Activated naive CD4-positive, alpha-beta T cell treated with anti-CD3 and anti-CD28 coated beads for 36 hours (primary cell): ENCODE measurements at regions of chr7 and their contacts with region 1.

Region 1: DNA sequence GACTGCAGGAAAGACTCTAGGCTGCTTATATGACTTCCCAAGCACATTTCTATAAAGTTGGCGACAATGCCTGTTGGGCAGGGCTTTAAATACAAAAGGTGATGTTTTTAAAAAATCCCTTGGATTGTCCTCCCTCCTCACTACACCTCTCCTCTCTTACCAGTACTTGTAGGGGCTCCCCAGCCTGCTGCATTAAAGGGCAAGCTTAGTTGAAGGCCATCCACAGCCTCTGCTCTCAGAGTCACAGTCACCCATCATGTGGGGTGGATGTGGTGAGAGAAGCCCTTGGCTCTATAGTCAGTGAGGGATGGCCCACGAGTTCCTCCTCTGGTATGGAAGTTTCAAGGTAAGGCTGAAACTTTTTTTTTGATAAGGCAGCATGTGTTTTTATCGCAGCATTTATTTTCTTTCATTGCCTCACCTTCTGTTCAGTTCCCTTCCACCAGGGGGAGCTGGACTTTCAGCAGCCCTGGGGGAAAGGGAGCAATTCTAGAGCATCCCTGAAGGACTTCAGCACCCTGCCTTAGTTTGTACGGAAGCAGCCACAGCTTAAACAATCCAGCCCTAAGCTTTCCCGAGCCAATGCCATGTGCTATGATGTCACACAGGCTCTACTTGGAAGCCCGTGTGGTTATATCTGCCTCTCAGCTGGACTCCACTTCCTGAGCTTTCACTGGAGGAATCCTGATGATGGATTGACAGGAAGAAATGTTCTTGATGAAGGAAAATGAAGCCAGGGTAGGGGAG is 131.9 kb downstream of the CALCR start:
- DNase-seq: peak; percentile 46
- H3K4me3 Mint-ChIP-seq: no peak overlapping the region
- H3K27ac Mint-ChIP-seq: no peak overlapping the region
- H3K4me1 Mint-ChIP-seq: no peaks in the 10 kb centered on the region
- H3K27me3 Mint-ChIP-seq: no peaks in the 10 kb centered on the region

Region 2: DNA sequence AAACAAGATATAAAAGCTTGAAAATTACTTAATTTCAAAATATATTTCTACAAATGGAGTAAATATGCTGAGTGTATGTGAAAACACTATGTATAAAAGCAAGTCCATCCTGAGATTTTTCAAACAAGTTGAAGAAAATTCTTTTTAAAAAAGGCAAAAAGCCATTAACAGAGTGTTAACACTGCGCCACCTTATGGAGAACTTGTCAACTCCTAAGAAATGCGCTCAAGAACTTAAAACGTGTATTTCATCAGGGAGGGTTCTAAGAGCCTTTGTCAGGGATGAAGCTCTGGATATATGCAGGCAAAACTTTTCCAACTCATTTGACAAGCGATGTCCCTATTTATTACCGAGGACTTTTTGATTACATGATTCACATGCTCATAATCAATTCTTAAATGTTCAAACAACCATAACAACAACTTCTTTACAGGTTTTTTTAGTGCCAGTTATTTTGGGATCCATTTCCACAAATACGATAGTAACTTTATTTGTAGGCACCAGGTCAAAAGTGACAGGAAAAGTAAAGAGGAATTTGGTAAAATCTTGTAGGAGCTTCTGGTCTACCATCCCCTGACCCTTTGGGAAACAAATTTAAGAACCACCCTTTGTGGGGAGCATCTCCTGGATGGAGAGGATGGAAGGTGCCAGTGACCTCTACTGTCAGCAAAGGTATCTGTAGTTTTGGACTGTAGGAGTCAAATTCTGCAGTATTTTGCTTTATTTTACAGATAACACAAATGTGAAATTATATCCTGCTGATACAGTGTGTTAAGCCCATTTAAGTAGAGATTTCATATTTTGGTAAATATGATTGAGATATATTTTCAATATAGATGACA is 108.6 kb after region 1 on chr7:
- CTCF ChIA-PET with region 1: interaction called, 6 read pairs
- intact Hi-C with region 1: loop called (anchors 2 kb)
- DNase-seq: no peak
- H3K4me3 Mint-ChIP-seq: no peak overlapping the region
- H3K27ac Mint-ChIP-seq: no peak overlapping the region
- H3K4me1 Mint-ChIP-seq: no peaks in the 10 kb centered on the region
- H3K27me3 Mint-ChIP-seq: no peaks in the 10 kb centered on the region

Region 3: GRCh38 chr7:94395141-94396036 is 952.7 kb after region 1 on chr7:
- CTCF ChIA-PET with region 1: no interaction called
- intact Hi-C with region 1: loop called (anchors 5 kb)
- DNase-seq: peak; percentile 46
- H3K4me3 Mint-ChIP-seq: no peak overlapping the region
- H3K27ac Mint-ChIP-seq: no peak overlapping the region
- H3K4me1 Mint-ChIP-seq: peaks cover 7% of the 10 kb centered on the region
- H3K27me3 Mint-ChIP-seq: peaks cover 35% of the 10 kb centered on the region